ENCODE measurements at regions of chr17 and their contacts with region 1.

Region 1: DNA sequence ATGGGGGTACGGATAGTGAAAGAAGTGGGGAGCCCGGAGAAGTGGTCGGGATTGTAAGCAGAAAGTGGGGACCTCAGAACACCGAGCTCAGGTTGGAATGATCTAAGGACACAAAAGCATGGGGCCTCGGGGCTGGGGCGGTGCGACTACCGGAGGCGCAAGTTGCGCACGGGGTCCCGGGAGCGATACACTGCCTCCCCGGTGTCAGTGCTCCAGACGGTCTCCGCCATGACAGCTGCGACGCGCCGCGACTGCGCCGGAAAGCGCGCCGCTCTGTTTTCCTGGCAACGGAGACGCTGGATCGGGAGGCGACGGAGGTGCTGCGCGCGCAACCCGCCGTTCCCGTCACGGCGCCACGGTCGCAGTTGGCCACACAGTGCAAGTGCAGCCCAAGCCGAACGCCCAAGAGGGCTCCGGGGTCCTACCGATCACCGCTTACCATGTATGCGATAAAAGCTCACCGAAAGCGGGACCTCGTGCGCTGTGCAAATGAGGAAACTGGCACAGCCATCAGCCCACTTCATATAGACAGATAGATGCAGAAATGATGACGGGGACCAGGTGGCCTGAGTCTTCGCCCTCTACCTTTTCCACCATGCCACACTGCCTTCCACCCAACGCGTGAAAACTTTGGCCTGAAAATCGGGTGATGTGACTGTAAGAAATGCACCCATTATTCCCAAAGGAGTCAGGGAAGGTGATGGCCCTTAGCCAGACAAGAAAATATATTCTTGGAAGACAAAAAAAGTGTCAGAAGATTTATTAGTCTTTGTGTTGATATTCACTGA is at the start of gene MKS1:
- DNase-seq: peak; percentile 90 to 96 (median 94)
- ATAC-seq: peak; percentile 98
- H3K4me3 ChIP-seq: peak within 1 kb of the TSS; percentile 68
- H3K4me3 Mint-ChIP-seq: peak within 1 kb of the TSS; percentile 86 to 96 (median 94)
- H3K27ac ChIP-seq: peak within 1 kb of the TSS; percentile 77
- H3K27ac Mint-ChIP-seq: peak within 1 kb of the TSS; percentile 92 to 98 (median 97)
- H3K4me1 ChIP-seq: peaks cover 8 to 9% of the 10 kb centered on the region in 2 donors
- H3K4me1 Mint-ChIP-seq: peaks cover 7 to 33% (median 23%) of the 10 kb centered on the region in 7 donors
- H3K27me3 ChIP-seq: no peaks in the 10 kb centered on the region
- H3K27me3 Mint-ChIP-seq: peaks cover 0 to 18% (median 0%) of the 10 kb centered on the region in 5 donors
- total RNA-seq, gene MKS1: 10.0 to 29.1 (median 19.7) TPM

Region 2: DNA sequence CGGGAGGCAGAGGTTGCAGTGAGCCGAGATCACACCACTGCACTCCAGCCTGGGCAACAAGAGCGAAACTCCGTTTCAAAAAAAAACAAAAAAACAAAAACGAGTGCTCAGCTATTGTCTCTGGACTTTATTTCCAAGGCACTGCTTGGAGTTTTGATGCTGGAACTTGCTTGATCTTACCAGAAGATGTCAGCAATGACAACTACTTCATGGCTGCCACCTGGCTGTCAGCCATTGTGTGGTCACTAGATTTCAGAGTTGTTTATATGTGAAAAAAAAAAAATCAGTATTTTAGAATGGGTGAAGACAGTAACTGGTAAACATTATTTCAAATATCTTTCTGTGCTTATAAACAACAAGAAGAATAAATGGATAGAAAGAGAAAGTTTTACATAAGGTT is 97.3 kb before region 1 on chr17:
- CTCF ChIA-PET with region 1: interaction called, 4 read pairs
- POLR2A ChIA-PET with region 1: no interaction called
- intact Hi-C with region 1: loop called in 1 of 2 experiments (anchors 1 kb)
- DNase-seq: peak in 7 of 9 donors; percentile 36 to 70 (median 56)
- ATAC-seq: peak; percentile 81
- H3K4me3 ChIP-seq: no peak overlapping the region
- H3K4me3 Mint-ChIP-seq: peak overlapping the region in 2 of 10 donors; percentile 27 to 33
- H3K27ac ChIP-seq: no peak overlapping the region
- H3K27ac Mint-ChIP-seq: peak overlapping the region in 4 of 9 donors; percentile 10 to 32 (median 12)
- H3K4me1 ChIP-seq: peaks cover 5 to 8% of the 10 kb centered on the region in 2 donors
- H3K4me1 Mint-ChIP-seq: peaks cover 2 to 28% (median 14%) of the 10 kb centered on the region in 7 donors
- H3K27me3 ChIP-seq: no peaks in the 10 kb centered on the region
- H3K27me3 Mint-ChIP-seq: peaks cover 5 to 32% (median 7%) of the 10 kb centered on the region in 5 donors

Region 3: GRCh38 chr17:58200017-58200633 is 19.1 kb before region 1 on chr17:
- CTCF ChIA-PET with region 1: interaction called, 4 read pairs
- POLR2A ChIA-PET with region 1: interaction called, 4 read pairs
- intact Hi-C with region 1: loop called in 1 of 2 experiments (anchors 1 kb)
- DNase-seq: peak in 8 of 9 donors; percentile 20 to 56 (median 38)
- ATAC-seq: peak; percentile 87
- H3K4me3 ChIP-seq: no peak overlapping the region
- H3K4me3 Mint-ChIP-seq: no peak overlapping the region
- H3K27ac ChIP-seq: no peak overlapping the region
- H3K27ac Mint-ChIP-seq: no peak overlapping the region
- H3K4me1 ChIP-seq: no peaks in the 10 kb centered on the region
- H3K4me1 Mint-ChIP-seq: peaks cover 0 to 4% (median 0%) of the 10 kb centered on the region in 7 donors
- H3K27me3 ChIP-seq: no peaks in the 10 kb centered on the region
- H3K27me3 Mint-ChIP-seq: peaks cover 0 to 10% (median 2%) of the 10 kb centered on the region in 5 donors

Region 4: DNA sequence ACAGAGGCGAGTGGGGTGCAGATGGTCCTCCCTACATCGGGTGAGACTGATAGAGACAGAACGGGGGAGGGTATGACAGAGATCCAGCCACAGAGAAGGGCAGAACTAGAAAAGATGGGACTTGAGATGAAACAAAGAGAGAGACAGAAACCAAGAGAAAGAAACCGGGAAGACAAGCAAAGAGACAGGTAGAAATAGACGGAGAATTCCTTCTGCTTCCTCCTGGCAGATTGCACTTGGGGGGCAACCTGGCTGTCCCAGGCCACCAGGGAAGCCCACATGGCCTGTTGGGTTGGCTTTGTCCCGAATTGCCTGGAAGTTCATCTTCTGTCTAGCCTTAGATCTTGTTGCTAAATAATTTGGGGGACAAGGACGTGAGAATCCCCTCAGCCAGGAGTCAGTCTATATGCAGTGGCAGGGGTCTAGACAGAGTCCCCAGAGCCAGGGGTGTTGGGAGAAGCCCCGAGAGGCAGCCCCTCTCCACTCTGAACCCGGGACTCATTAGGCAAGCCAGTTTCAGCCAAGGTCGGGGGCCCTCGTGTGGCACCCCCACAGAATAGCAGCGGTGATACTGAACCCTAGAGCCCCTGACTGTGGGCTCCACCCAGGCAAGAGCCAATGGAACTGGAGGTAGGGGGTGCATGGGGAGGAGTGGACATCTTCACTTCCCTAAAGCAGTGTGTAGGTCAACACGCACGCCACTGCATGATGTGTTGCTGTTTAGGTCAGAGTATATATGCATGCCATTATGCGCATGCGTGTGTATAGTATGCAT is 110.0 kb after region 1 on chr17:
- CTCF ChIA-PET with region 1: no interaction called
- POLR2A ChIA-PET with region 1: no interaction called
- intact Hi-C with region 1: loop called in 1 of 2 experiments (anchors 2 kb)
- DNase-seq: peak in 8 of 9 donors; percentile 52 to 83 (median 62)
- ATAC-seq: peak; percentile 62
- H3K4me3 ChIP-seq: peak overlapping the region; percentile 64
- H3K4me3 Mint-ChIP-seq: peak overlapping the region; percentile 86 to 100 (median 94)
- H3K27ac ChIP-seq: peak overlapping the region; percentile 98
- H3K27ac Mint-ChIP-seq: peak overlapping the region; percentile 91 to 98 (median 94)
- H3K4me1 ChIP-seq: peaks cover 4 to 18% of the 10 kb centered on the region in 2 donors
- H3K4me1 Mint-ChIP-seq: peaks cover 37 to 61% (median 50%) of the 10 kb centered on the region in 7 donors
- H3K27me3 ChIP-seq: no peaks in the 10 kb centered on the region
- H3K27me3 Mint-ChIP-seq: peaks cover 0 to 19% (median 0%) of the 10 kb centered on the region in 5 donors

Region 5: GRCh38 chr17:58352014-58352842 is 133.0 kb after region 1 on chr17 and contains the start of gene SUPT4H1:
- CTCF ChIA-PET with region 1: no interaction called
- POLR2A ChIA-PET with region 1: no interaction called
- intact Hi-C with region 1: loop called in 1 of 2 experiments (anchors 2 kb)
- DNase-seq: peak; percentile 83 to 93 (median 92)
- ATAC-seq: peak; percentile 98
- H3K4me3 ChIP-seq: peak within 1 kb of the TSS; percentile 95
- H3K4me3 Mint-ChIP-seq: peak within 1 kb of the TSS; percentile 97 to 100 (median 99)
- H3K27ac ChIP-seq: peak within 1 kb of the TSS; percentile 85
- H3K27ac Mint-ChIP-seq: peak within 1 kb of the TSS; percentile 93 to 99 (median 98)
- H3K4me1 ChIP-seq: peaks cover 16 to 31% of the 10 kb centered on the region in 2 donors
- H3K4me1 Mint-ChIP-seq: peaks cover 38 to 73% (median 66%) of the 10 kb centered on the region in 7 donors
- H3K27me3 ChIP-seq: no peaks in the 10 kb centered on the region
- H3K27me3 Mint-ChIP-seq: no peaks in the 10 kb centered on the region
- total RNA-seq, gene SUPT4H1: 36.0 to 75.6 (median 62.3) TPM